ENCODE measurements at regions of chr7 and their contacts with region 1.

Region 1: DNA sequence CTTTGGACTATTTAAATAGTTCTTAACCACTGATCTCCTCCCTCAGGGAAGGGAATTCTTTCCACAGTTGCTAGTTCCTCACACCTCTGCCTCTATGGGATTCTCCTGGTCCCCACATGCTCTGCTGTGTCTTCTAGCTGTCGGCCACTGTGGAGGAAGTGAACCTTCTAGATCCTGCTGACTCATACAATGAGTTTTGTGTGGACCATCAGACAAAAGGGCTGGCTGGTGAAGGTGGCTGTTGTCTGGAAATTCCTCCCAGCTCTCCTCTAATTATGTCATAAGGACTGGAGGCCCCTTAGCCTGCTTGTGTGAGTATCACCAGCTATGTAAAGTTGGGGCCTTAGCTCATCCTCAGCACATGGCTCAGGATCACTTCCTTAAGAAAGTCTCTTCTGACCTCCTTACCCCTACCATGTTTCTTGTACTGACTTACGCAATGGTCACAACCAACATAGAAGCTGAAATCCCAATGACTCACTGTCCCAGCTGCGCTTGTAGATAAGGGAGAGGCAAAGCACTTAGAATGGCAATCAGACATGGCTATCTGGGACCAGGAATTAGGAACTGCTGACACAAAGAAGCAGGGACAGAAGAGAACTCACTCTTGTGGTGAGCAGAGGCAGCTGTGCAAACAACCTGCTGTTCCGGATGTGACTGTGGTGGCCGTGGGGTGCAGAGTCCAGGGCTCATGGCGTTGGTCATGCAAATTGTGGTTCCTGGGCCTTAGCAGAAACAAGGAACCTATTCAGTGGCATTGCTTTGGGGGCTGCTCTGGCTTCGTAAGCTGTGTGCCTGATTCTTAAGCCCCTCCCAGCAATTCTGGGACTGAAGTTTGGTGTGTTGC is 2.5 kb upstream of the MACC1 start:
- DNase-seq: peak; percentile 83
- H3K4me3 ChIP-seq: peak overlapping the region; percentile 22
- H3K27ac ChIP-seq: peak overlapping the region; percentile 71
- H3K4me1 ChIP-seq: peaks cover 41% of the 10 kb centered on the region
- CTCF ChIP-seq: no peak

Region 2: DNA sequence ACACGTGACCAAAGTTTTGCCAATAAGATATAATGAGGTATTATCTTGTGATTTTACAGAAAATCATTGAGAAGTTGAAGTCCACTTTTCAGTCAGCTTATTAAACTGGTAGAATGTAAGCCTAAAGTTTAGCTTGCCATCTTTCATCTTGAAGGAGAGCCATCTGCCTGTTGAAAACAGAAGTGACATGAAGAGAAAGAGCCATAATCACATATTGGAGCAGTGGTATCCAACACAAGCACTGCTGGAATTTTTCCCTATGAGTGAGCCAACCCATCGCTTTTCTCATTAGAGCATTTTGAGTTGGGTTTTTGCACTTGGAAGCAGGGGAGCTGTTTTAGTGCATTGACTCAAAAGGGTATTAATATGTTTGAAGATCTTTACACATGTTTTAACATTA is 956.8 kb before region 1 on chr7:
- CTCF ChIA-PET with region 1: no interaction called
- POLR2A ChIA-PET with region 1: no interaction called
- intact Hi-C with region 1: no loop called
- DNase-seq: no peak
- H3K4me3 ChIP-seq: no peak overlapping the region
- H3K27ac ChIP-seq: no peak overlapping the region
- H3K4me1 ChIP-seq: no peaks in the 10 kb centered on the region
- CTCF ChIP-seq: no peak

Region 3: GRCh38 chr7:20193227-20193777 is 26.4 kb before region 1 on chr7:
- CTCF ChIA-PET with region 1: interaction called, 4 read pairs
- POLR2A ChIA-PET with region 1: interaction called, 25 read pairs
- intact Hi-C with region 1: loop called (anchors 1 kb)
- DNase-seq: peak; percentile 45
- H3K4me3 ChIP-seq: peak overlapping the region; percentile 15
- H3K27ac ChIP-seq: peak overlapping the region; percentile 47
- H3K4me1 ChIP-seq: peaks cover 56% of the 10 kb centered on the region
- CTCF ChIP-seq: no peak

Region 4: GRCh38 chr7:20199015-20199737 is 20.5 kb before region 1 on chr7:
- CTCF ChIA-PET with region 1: interaction called, 5 read pairs
- POLR2A ChIA-PET with region 1: interaction called, 25 read pairs
- intact Hi-C with region 1: no loop called
- DNase-seq: peak; percentile 68
- H3K4me3 ChIP-seq: peak overlapping the region; percentile 36
- H3K27ac ChIP-seq: peak overlapping the region; percentile 58
- H3K4me1 ChIP-seq: peaks cover 45% of the 10 kb centered on the region
- CTCF ChIP-seq: no peak

Measured in OCI-LY7 (cell line).